ENCODE measurements at regions of chr12 and their contacts with region 1.

Region 1: GRCh38 chr12:47021298-47021697 is 58.1 kb upstream of the PCED1B start:
- DNase-seq: peak; percentile 28 to 72
- H3K4me3 ChIP-seq: no peak overlapping the region
- H3K27ac ChIP-seq: no peak overlapping the region
- H3K4me1 ChIP-seq: peaks cover 30% of the 10 kb centered on the region
- H3K27me3 ChIP-seq: no peaks in the 10 kb centered on the region
- CTCF ChIP-seq: peak; percentile 82

Region 2: GRCh38 chr12:46124848-46125619 is 896.3 kb before region 1 on chr12:
- CTCF ChIA-PET with region 1: interaction called, 10 read pairs
- POLR2A ChIA-PET with region 1: interaction called, 3 read pairs
- intact Hi-C with region 1: loop called (anchors 10 kb)
- DNase-seq: peak; percentile 36 to 60
- H3K4me3 ChIP-seq: 0 out of 2 replicates have a peak overlapping the region, but pooled peaks have one; percentile 35
- H3K27ac ChIP-seq: no peak overlapping the region
- H3K4me1 ChIP-seq: 0 out of 2 replicates have a peak, but pooled peaks cover 4% of the 10 kb centered on the region
- H3K27me3 ChIP-seq: no peaks in the 10 kb centered on the region
- CTCF ChIP-seq: peak; percentile 83

Region 3: GRCh38 chr12:46455648-46456352 is 565.5 kb before region 1 on chr12:
- CTCF ChIA-PET with region 1: no interaction called
- POLR2A ChIA-PET with region 1: no interaction called
- intact Hi-C with region 1: loop called (anchors 1 kb)
- DNase-seq: peak; percentile 78 to 100
- H3K4me3 ChIP-seq: peak overlapping the region; percentile 38; the same call in 1 of the 2 replicates
- H3K27ac ChIP-seq: peak overlapping the region; percentile 99
- H3K4me1 ChIP-seq: peaks cover 65% of the 10 kb centered on the region
- H3K27me3 ChIP-seq: no peaks in the 10 kb centered on the region
- CTCF ChIP-seq: no peak

Region 4: GRCh38 chr12:46933947-46934346 is 87.4 kb before region 1 on chr12:
- CTCF ChIA-PET with region 1: interaction called, 3 read pairs
- POLR2A ChIA-PET with region 1: no interaction called
- intact Hi-C with region 1: loop called (anchors 1 kb)
- DNase-seq: peak in 1 of 2 experiments; percentile 7
- H3K4me3 ChIP-seq: no peak overlapping the region
- H3K27ac ChIP-seq: no peak overlapping the region
- H3K4me1 ChIP-seq: no peaks in the 10 kb centered on the region; the same call in 1 of the 2 replicates
- H3K27me3 ChIP-seq: no peaks in the 10 kb centered on the region
- CTCF ChIP-seq: peak; percentile 70

Region 5: DNA sequence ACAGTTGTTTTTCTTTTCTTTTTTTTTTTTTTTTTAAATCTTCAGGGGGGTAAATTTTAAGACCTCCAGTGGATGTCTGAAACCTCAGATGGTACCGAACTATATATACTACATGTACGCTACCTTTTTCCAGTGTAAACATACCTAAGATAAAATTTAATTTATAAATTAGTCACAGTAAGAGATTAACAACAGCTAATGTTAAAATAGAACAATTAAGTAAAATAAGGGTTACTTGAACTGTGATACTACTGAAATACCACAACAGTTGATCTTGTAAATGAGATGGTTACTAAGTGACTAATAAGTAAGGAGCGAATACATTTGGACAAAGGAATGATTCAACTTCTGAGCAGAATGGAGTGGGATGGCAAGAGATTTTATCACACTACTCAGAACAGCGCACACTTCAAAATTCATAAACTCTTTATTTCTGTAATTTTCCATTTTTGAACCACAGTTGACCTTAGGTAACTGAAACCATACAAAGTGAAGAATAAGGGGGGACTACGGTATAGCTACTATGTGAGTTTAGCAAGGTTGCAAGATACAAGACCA is 22.4 kb before region 1 on chr12:
- CTCF ChIA-PET with region 1: no interaction called
- POLR2A ChIA-PET with region 1: interaction called, 11 read pairs
- intact Hi-C with region 1: no loop called
- DNase-seq: peak in 1 of 2 experiments; percentile 74
- H3K4me3 ChIP-seq: no peak overlapping the region
- H3K27ac ChIP-seq: 0 out of 2 replicates have a peak overlapping the region, but pooled peaks have one; percentile 35
- H3K4me1 ChIP-seq: peaks cover 14% of the 10 kb centered on the region
- H3K27me3 ChIP-seq: no peaks in the 10 kb centered on the region
- CTCF ChIP-seq: no peak